Caco-2 (cell line): ENCODE measurements at regions of chr20 and their contacts with region 1.

Region 1: DNA sequence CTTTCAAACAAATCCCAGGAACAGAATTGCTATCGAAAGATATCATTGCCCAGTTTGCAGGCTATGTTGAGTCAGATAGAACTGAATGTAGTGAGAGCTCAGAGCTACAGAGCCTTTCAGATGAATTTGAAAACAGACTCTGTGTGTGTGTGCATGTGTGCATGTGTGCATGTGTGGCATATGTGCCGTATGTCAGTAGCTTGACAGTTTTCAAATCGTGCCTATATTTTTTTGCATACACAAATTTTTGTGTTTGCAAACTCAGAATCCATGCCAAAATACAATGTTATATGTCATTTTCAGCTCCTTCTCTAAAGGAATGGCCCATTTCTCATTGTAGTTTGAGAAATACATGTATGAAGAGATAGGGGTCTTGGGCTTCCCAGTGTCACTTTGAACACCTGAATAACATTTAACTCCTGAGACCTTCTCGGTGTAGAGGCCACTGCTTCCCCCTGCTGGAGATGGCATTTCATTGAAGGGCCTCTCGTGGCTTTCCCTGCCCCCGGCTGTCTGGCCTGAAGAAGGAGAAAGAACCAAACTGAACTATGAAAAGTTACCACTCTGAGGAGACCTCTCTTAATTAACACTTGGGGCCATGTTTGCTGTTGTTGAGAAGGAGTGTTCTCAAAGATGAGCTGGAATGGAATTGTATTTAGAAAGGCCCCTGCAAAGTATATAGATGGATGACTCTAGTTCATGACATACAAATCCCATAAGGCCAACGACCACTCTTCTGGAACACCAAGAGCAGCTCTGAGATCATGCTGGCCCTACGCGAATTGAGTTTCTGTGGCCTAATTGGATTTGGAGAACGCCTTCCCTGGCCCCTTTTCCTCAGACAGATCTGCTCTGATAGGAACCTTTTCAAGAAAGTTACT is 58.7 kb downstream of the VAPB start:
- DNase-seq: peak; percentile 87 to 89
- H3K4me3 ChIP-seq: no peak overlapping the region
- H3K4me3 Mint-ChIP-seq: no peak overlapping the region
- H3K27ac Mint-ChIP-seq: no peak overlapping the region
- H3K4me1 ChIP-seq: no peaks in the 10 kb centered on the region
- H3K4me1 Mint-ChIP-seq: peaks cover 6% of the 10 kb centered on the region
- H3K27me3 ChIP-seq: no peaks in the 10 kb centered on the region
- H3K27me3 Mint-ChIP-seq: no peaks in the 10 kb centered on the region
- CTCF ChIP-seq: peak; percentile 97

Region 2: GRCh38 chr20:58236612-58237330 is 211.0 kb before region 1 on chr20:
- CTCF ChIA-PET with region 1: no interaction called
- POLR2A ChIA-PET with region 1: no interaction called
- intact Hi-C with region 1: loop called (anchors 1 kb)
- DNase-seq: peak; percentile 77 to 92
- H3K4me3 ChIP-seq: peak overlapping the region; percentile 40
- H3K4me3 Mint-ChIP-seq: peak overlapping the region; percentile 83
- H3K27ac Mint-ChIP-seq: no peak overlapping the region
- H3K4me1 ChIP-seq: no peaks in the 10 kb centered on the region
- H3K4me1 Mint-ChIP-seq: peaks cover 5% of the 10 kb centered on the region
- H3K27me3 ChIP-seq: peaks cover 5% of the 10 kb centered on the region; the same call in 1 of the 2 replicates
- H3K27me3 Mint-ChIP-seq: peaks cover 33% of the 10 kb centered on the region
- CTCF ChIP-seq: peak; percentile 99 to 100

Region 3: DNA sequence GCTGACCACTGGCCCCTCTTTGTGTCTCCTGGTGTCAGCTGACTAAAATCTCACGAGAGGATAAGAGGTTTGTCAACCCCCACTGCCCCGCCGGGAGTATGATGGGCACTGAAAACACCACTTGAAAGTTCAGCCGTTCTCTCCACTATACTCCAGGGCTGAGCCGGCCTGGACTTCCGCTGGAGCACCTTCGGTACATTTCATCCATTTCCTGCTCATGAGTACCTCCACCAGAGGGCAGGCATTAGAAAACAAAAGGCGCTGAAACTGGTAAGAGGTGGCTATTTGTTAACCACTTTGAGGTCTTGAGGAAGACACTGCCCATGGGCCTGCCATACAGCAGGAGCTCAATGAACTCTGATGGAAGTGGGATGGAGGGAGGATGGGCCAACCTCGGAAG is 201.4 kb before region 1 on chr20:
- CTCF ChIA-PET with region 1: interaction called, 5 read pairs
- POLR2A ChIA-PET with region 1: no interaction called
- intact Hi-C with region 1: loop called (anchors 1 kb)
- DNase-seq: peak; percentile 71 to 75
- H3K4me3 ChIP-seq: no peak overlapping the region
- H3K4me3 Mint-ChIP-seq: no peak overlapping the region
- H3K27ac Mint-ChIP-seq: no peak overlapping the region
- H3K4me1 ChIP-seq: no peaks in the 10 kb centered on the region; the same call in none of the 2 replicates
- H3K4me1 Mint-ChIP-seq: peaks cover 24% of the 10 kb centered on the region
- H3K27me3 ChIP-seq: no peaks in the 10 kb centered on the region
- H3K27me3 Mint-ChIP-seq: no peaks in the 10 kb centered on the region
- CTCF ChIP-seq: peak; percentile 81

Region 4: DNA sequence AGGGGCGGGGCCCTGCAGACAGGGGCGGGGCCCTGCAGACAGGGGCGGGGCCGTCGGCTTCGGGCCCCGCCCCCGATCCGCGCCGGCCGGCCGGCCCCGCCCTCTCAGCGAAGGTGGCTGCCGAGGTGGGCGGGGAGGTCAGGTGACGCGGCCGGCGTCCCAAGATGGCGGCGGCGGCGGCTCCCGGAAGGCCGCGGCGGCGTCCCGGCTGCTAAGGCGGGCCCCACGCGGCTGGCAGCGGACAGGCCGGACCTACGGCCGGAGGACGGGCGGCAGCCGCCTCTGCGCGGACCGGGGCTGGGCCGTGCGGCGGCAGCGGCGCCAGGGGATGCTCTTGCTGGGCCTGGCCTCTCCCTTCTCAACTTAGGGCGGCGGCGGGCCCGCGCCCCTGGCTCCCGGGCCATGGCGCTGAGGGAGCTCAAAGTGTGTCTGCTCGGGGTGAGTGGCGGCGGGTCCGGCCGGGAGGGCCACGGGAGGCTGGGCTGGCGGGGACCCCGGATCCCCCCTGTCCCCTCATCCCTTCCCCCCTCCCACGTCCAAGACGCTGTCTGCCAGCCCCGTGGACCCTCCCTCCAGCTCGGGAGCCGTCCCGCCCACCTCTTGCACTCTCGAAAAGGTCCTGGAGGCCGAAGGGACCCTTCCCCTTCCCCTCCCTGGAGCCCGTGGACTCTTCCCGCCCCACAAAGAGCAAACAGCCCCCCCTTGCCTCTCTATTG is 138.0 kb before region 1 on chr20 and contains the start of gene RAB22A:
- CTCF ChIA-PET with region 1: no interaction called
- POLR2A ChIA-PET with region 1: no interaction called
- intact Hi-C with region 1: loop called (anchors 5 kb)
- DNase-seq: peak; percentile 81 to 93
- H3K4me3 ChIP-seq: peak within 1 kb of the TSS; percentile 94
- H3K4me3 Mint-ChIP-seq: peak within 1 kb of the TSS; percentile 97
- H3K27ac Mint-ChIP-seq: peak within 1 kb of the TSS; percentile 92
- H3K4me1 ChIP-seq: peaks cover 13% of the 10 kb centered on the region; the same call in 1 of the 2 replicates
- H3K4me1 Mint-ChIP-seq: peaks cover 14% of the 10 kb centered on the region
- H3K27me3 ChIP-seq: no peaks in the 10 kb centered on the region
- H3K27me3 Mint-ChIP-seq: no peaks in the 10 kb centered on the region
- CTCF ChIP-seq: no peak
- total RNA-seq, gene RAB22A: 24.1 and 25.7 TPM in 2 replicates

Region 5: GRCh38 chr20:58395604-58396003 is 52.1 kb before region 1 on chr20:
- CTCF ChIA-PET with region 1: no interaction called
- POLR2A ChIA-PET with region 1: no interaction called
- intact Hi-C with region 1: no loop called
- DNase-seq: no peak
- H3K4me3 ChIP-seq: no peak overlapping the region
- H3K4me3 Mint-ChIP-seq: no peak overlapping the region
- H3K27ac Mint-ChIP-seq: no peak overlapping the region
- H3K4me1 ChIP-seq: peaks cover 33% of the 10 kb centered on the region
- H3K4me1 Mint-ChIP-seq: peaks cover 43% of the 10 kb centered on the region
- H3K27me3 ChIP-seq: no peaks in the 10 kb centered on the region
- H3K27me3 Mint-ChIP-seq: no peaks in the 10 kb centered on the region
- CTCF ChIP-seq: no peak